ENCODE measurements at regions of chr1 and their contacts with region 1.

Region 1: GRCh38 chr1:214303141-214303930 is 22.4 kb downstream of the SMYD2 start:
- DNase-seq: peak in 2 of 3 donors; percentile 17 to 49
- H3K4me3 ChIP-seq: no peak overlapping the region
- H3K27ac ChIP-seq: no peak overlapping the region
- H3K4me1 ChIP-seq: peaks cover 0 to 10% (median 0%) of the 10 kb centered on the region in 4 experiments
- H3K27me3 ChIP-seq: no peaks in the 10 kb centered on the region

Region 2: DNA sequence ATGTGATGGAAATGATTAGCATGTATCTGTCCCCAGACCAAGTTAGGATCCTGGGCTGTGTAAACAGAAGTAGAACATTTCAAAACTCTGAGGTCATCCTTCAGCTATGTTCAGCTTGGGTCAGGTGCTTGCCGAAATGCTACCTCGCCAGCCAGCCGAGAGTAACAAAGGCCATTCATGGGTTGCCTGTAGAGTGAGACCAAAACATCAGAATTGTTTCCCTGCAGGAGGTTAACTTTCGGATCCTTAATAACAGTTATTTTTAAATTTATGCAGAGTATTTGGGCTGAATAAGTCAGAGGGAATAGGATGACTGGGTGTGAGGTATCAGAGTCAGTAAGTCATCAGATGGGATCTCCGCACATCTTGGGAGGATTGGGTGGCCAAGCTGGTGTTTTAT is 13.3 kb after region 1 on chr1:
- CTCF ChIA-PET with region 1: interaction called, 10 read pairs
- POLR2A ChIA-PET with region 1: interaction called, 3 read pairs
- DNase-seq: no peak
- H3K4me3 ChIP-seq: no peak overlapping the region
- H3K27ac ChIP-seq: no peak overlapping the region
- H3K4me1 ChIP-seq: peaks cover 0 to 4% (median 2%) of the 10 kb centered on the region in 4 experiments
- H3K27me3 ChIP-seq: no peaks in the 10 kb centered on the region

Region 3: GRCh38 chr1:214416417-214416816 is 113.1 kb after region 1 on chr1:
- CTCF ChIA-PET with region 1: no interaction called
- POLR2A ChIA-PET with region 1: no interaction called
- DNase-seq: no peak
- H3K4me3 ChIP-seq: no peak overlapping the region
- H3K27ac ChIP-seq: no peak overlapping the region
- H3K4me1 ChIP-seq: peaks cover 0 to 2% (median 0%) of the 10 kb centered on the region in 4 experiments
- H3K27me3 ChIP-seq: no peaks in the 10 kb centered on the region

Measured in common myeloid progenitor, CD34-positive (primary cell).